Activated CD4-positive, alpha-beta memory T cell treated with anti-CD3 and anti-CD28 coated beads, Interleukin-2, amount 10 ng/mL, durations not matched to agents 7 days and 5 days (primary cell): ENCODE measurements at regions of chr3 and their contacts with region 1.

Region 1: GRCh38 chr3:102113411-102114041 is 264.2 kb downstream of the NFKBIZ start:
- DNase-seq: no peak
- H3K4me3 Mint-ChIP-seq: no peak overlapping the region
- H3K27ac Mint-ChIP-seq: peak overlapping the region; percentile 62
- H3K4me1 Mint-ChIP-seq: peaks cover 32% of the 10 kb centered on the region
- H3K27me3 Mint-ChIP-seq: no peaks in the 10 kb centered on the region

Region 2: DNA sequence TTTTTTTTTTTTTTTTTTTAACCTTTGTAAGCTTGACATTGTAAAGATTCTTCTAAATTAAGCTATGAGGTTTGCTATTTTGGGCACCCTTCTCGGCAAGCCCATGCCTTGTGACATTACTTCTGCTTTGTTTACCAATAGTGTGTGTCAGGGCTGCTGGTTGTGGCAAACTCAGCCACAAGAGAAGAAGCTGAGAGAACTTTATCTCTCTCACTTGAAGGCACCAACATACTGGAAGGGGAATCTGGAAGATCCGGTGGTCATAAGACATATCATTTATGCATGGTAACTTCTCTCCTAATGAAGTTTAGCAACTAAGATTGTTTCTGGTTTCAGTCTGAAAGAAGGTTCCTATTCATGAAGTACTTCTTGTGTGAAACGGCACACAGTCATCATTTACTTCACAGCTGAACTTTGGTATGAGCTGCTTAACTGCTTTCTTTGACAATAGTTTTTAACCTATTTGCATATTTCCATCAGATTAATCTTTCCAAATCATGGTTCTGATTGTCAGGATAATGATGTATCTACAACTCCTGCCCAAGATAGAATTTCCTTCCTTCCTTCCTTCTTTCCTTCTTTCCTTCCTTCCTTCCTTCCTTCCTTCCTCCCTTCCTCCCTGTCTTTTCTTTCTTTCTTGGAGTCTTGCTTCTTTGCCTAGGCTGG is 74.9 kb before region 1 on chr3:
- CTCF ChIA-PET with region 1: no interaction called
- POLR2A ChIA-PET with region 1: no interaction called
- DNase-seq: no peak
- H3K4me3 Mint-ChIP-seq: no peak overlapping the region
- H3K27ac Mint-ChIP-seq: no peak overlapping the region
- H3K4me1 Mint-ChIP-seq: no peaks in the 10 kb centered on the region
- H3K27me3 Mint-ChIP-seq: peaks cover 2% of the 10 kb centered on the region

Region 3: DNA sequence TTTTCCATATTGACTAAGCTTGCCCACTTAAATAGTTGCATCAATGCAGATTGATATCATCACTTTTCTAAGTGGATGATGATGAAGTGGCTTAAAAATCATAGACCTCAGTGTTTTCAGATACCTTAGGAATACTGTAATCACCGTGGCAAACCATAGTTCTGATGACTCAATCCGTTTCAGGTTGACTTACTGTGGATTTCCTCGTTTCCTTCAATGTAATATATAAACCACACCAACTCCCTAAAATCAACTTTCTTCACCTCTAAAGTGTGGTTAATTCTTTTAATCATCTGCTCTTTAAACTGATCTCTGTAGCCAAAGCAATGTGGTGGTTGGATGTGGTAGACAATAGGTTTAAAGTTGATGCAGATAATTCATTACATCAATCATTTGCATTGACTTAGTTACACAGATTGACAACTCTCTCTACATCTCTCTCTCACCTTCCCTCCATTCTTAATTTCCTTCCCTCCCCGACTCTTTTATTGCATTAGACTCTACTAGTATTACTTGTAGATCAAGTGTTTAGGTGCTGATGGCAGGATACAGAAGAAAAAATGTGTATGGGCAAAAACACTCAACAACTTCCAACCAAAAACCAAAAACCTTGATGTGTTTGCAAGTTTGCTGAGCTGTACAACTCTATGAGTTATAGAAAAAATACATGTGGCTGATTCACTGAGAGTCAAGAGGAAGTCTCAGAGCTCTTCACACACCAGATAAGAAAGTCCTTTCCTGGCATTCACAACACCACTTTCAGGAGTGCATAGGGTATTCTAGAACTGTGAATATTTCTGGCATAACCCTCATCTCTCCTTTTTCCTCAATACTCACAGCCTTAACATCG is 20.7 kb before region 1 on chr3:
- CTCF ChIA-PET with region 1: interaction called, 3 read pairs
- POLR2A ChIA-PET with region 1: interaction called, 26 read pairs
- DNase-seq: no peak
- H3K4me3 Mint-ChIP-seq: peak overlapping the region; percentile 8
- H3K27ac Mint-ChIP-seq: peak overlapping the region; percentile 83
- H3K4me1 Mint-ChIP-seq: peaks cover 44% of the 10 kb centered on the region
- H3K27me3 Mint-ChIP-seq: peaks cover 6% of the 10 kb centered on the region

Region 4: DNA sequence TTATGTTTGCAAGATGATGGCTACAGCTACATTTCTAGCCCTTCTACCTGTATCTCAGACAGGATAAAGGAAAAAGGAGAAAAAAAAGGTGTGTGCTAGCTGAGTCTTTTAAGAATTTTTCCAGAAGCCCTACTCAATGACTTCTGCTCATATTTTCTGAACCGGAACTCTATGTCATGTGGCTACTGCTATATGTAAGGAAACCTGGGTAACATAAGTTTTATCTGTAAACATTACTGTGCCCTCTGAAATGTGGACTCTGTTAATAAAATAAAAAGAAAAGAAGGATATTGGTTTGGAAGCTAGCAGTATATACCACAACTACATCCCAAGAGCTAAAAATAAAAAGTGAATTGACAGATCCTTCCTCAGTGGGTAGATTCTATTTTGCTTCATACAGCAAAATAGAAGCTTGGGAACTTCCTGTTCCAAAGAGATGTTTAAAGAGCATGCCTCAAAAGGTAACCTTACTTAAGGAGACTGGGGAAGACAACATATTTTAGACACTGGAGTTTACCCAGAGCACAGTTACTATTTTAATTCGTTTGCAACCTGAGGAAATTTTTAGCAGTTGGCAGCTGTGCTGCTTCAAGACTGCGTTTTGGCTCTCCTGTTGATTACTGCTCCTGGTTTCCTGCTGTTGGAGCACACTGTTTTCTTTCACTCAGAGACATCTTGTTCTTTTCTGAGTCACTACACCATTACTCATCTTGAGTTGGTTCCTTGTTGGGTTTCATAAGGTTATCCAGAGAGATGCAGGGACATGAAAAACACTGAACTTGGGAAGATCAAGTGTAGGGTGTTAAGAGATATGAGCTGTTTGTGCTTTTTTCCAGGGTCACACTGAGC is 16.5 kb after region 1 on chr3:
- CTCF ChIA-PET with region 1: no interaction called
- POLR2A ChIA-PET with region 1: no interaction called
- DNase-seq: no peak
- H3K4me3 Mint-ChIP-seq: no peak overlapping the region
- H3K27ac Mint-ChIP-seq: peak overlapping the region; percentile 7
- H3K4me1 Mint-ChIP-seq: peaks cover 14% of the 10 kb centered on the region
- H3K27me3 Mint-ChIP-seq: no peaks in the 10 kb centered on the region